ENCODE measurements at regions of chr7 and their contacts with region 1.

Region 1: GRCh38 chr7:21305455-21306235 is 122.2 kb upstream of the SP4 start:
- DNase-seq: no peak
- H3K4me3 Mint-ChIP-seq: no peak overlapping the region
- H3K27ac Mint-ChIP-seq: peak overlapping the region; percentile 43
- H3K4me1 Mint-ChIP-seq: peaks cover 15% of the 10 kb centered on the region
- H3K27me3 Mint-ChIP-seq: no peaks in the 10 kb centered on the region

Region 2: GRCh38 chr7:21355406-21355874 is 49.8 kb after region 1 on chr7:
- intact Hi-C with region 1: loop called (anchors 2 kb)
- DNase-seq: peak; percentile 90
- H3K4me3 Mint-ChIP-seq: peak overlapping the region; percentile 77
- H3K27ac Mint-ChIP-seq: peak overlapping the region; percentile 97
- H3K4me1 Mint-ChIP-seq: peaks cover 76% of the 10 kb centered on the region
- H3K27me3 Mint-ChIP-seq: no peaks in the 10 kb centered on the region

Region 3: GRCh38 chr7:21454182-21454581 is 148.5 kb after region 1 on chr7:
- intact Hi-C with region 1: no loop called
- DNase-seq: no peak
- H3K4me3 Mint-ChIP-seq: no peak overlapping the region
- H3K27ac Mint-ChIP-seq: no peak overlapping the region
- H3K4me1 Mint-ChIP-seq: peaks cover 12% of the 10 kb centered on the region
- H3K27me3 Mint-ChIP-seq: no peaks in the 10 kb centered on the region

Measured in activated CD4-positive, alpha-beta T cell treated with anti-CD3 and anti-CD28 coated beads, Interleukin-2, amount 10 ng/mL, durations not matched to agents 24 days and 14 days (primary cell).